Activated CD8-positive, alpha-beta T cell treated with anti-CD3 and anti-CD28 coated beads, Interleukin-2, amount 10 ng/mL, durations not matched to agents 7 days and 5 days (primary cell): ENCODE measurements at regions of chr1 and their contacts with region 1.

Region 1: DNA sequence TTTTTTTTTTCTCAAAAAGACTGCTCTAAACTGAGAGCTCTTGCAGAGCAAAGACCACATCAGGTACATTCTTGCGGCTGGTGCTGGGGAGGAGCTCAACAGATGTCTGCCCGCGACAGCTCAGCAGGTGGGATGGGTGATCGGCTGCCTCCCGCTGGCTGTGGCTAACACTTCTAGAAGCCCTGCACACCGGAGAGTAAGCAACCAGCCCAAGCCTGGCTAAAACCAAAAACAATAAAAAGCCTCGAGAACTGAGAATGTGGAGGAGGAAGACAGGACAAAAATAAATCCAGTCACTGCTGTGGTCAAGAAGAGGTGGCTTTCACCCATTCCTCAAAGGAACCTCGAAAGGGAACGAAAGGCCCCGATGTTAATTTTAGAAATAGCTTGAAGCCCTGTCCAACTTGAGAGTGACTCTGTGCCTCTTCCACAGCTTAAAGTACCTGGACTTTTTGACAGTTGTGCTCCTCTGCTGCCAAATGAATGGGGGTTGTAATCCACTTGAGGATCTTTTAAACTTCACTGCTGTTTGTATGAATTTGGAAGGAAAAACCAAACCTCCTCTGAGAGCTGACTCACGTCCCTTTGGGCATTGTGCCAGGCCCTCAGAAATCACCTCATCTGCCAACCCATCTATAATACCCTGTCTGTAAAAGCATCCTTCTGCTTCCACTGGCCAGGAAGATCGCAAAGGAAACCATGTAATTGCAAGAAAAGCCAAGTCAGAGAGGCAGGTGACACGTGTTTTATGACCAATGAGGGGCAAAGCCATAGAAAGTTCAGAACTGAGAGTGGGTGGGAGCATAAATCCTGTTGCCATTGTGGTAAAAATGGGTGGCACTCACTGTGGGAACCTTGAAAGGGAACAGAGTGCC is 78.6 kb downstream of the KCNN3 start:
- DNase-seq: peak; percentile 93
- ATAC-seq: peak; percentile 98
- H3K4me3 Mint-ChIP-seq: peak overlapping the region; percentile 52
- H3K27ac Mint-ChIP-seq: peak overlapping the region; percentile 89
- H3K4me1 Mint-ChIP-seq: peaks cover 35% of the 10 kb centered on the region
- H3K27me3 Mint-ChIP-seq: peaks cover 17% of the 10 kb centered on the region

Region 2: DNA sequence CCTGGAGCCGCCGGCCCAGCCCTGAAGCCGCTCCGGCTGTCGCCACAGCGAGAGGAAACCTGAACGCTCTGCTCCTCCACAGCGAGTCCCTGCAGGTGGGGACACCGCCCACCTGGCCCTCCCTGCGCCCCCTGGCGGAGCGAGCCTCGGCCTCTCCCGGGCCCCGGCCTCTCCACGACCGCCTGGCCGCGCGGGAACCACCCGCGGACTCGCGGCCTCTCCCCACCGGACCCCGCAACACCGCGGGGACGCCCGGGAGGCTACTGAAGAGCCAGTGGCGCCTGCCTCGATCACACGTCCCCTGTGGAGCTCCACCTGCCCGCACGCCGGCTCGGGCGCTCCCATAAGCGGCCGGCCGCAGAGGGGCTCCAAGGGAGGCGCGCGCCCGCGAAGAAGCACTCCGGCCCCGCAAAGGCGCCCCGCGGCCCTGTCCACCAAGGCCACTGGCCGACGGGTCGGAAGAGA is 31.0 kb before region 1 on chr1:
- CTCF ChIA-PET with region 1: interaction called, 35 read pairs
- POLR2A ChIA-PET with region 1: interaction called, 4 read pairs
- DNase-seq: peak; percentile 87
- ATAC-seq: peak; percentile 93
- H3K4me3 Mint-ChIP-seq: peak overlapping the region; percentile 53
- H3K27ac Mint-ChIP-seq: no peak overlapping the region
- H3K4me1 Mint-ChIP-seq: peaks cover 45% of the 10 kb centered on the region
- H3K27me3 Mint-ChIP-seq: peaks cover 21% of the 10 kb centered on the region

Region 3: GRCh38 chr1:154767315-154768240 is 24.0 kb before region 1 on chr1:
- CTCF ChIA-PET with region 1: interaction called, 35 read pairs
- POLR2A ChIA-PET with region 1: interaction called, 3 read pairs
- DNase-seq: no peak
- ATAC-seq: no peak
- H3K4me3 Mint-ChIP-seq: no peak overlapping the region
- H3K27ac Mint-ChIP-seq: no peak overlapping the region
- H3K4me1 Mint-ChIP-seq: peaks cover 3% of the 10 kb centered on the region
- H3K27me3 Mint-ChIP-seq: peaks cover 15% of the 10 kb centered on the region

Region 4: GRCh38 chr1:154802982-154803920 is 11.7 kb after region 1 on chr1:
- CTCF ChIA-PET with region 1: interaction called, 17 read pairs
- POLR2A ChIA-PET with region 1: no interaction called
- DNase-seq: no peak
- ATAC-seq: no peak
- H3K4me3 Mint-ChIP-seq: no peak overlapping the region
- H3K27ac Mint-ChIP-seq: no peak overlapping the region
- H3K4me1 Mint-ChIP-seq: peaks cover 2% of the 10 kb centered on the region
- H3K27me3 Mint-ChIP-seq: peaks cover 14% of the 10 kb centered on the region

Region 5: DNA sequence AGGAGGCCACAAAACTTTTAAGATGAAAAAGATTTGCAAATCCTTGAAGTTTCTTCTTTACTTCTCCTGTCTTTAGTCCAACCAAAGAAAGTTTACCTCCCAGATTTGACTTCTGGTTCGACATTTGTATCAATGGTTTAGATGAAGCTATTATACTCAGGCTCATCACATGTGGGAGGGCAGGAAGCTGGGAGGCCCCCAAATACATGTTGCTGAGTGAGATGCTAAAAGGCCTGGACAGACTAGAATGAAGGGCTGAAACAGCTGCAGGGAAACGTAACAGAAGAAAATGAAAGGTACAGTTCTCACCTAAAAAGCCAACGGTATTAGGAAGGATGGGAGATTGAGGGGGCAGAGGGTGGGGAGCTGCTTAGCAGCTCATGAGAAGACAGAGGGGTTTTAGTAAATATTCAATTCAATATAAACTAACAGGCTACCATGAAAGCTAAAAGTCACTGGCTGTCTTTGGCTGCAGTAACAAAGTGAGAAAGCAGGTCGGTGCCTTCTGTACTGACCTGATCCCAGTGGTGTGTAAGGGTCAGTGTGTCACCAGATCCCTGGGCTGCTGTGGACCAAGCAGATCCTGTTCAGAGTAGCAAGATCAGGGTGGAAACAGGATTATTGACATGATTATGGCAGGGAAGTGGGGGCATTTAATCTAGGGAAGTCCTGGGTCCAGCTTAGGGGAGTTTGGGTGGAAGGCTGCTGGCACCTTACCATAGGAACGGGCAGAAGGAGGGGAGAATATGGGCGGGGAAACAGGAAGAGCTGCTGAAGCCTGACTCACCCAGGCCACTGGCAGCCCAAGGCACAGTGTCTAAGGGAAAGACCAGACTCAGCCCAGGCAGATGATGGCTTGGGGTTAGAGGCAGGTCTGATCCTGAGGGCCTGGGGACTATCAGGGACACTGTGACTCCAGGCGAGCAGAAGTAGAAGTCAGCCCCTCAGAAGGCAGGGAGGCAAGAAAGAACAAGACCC is 18.2 kb after region 1 on chr1:
- CTCF ChIA-PET with region 1: interaction called, 17 read pairs
- POLR2A ChIA-PET with region 1: no interaction called
- DNase-seq: no peak
- ATAC-seq: peak; percentile 49
- H3K4me3 Mint-ChIP-seq: no peak overlapping the region
- H3K27ac Mint-ChIP-seq: peak overlapping the region; percentile 53
- H3K4me1 Mint-ChIP-seq: peaks cover 13% of the 10 kb centered on the region
- H3K27me3 Mint-ChIP-seq: peaks cover 11% of the 10 kb centered on the region

Region 6: GRCh38 chr1:154837672-154838171 is 46.2 kb after region 1 on chr1:
- CTCF ChIA-PET with region 1: no interaction called
- POLR2A ChIA-PET with region 1: no interaction called
- DNase-seq: no peak
- ATAC-seq: no peak
- H3K4me3 Mint-ChIP-seq: no peak overlapping the region
- H3K27ac Mint-ChIP-seq: no peak overlapping the region
- H3K4me1 Mint-ChIP-seq: peaks cover 7% of the 10 kb centered on the region
- H3K27me3 Mint-ChIP-seq: peaks cover 6% of the 10 kb centered on the region